Left colon (tissue), 2 donors: ENCODE measurements at regions of chr10 and their contacts with region 1.

Region 1: DNA sequence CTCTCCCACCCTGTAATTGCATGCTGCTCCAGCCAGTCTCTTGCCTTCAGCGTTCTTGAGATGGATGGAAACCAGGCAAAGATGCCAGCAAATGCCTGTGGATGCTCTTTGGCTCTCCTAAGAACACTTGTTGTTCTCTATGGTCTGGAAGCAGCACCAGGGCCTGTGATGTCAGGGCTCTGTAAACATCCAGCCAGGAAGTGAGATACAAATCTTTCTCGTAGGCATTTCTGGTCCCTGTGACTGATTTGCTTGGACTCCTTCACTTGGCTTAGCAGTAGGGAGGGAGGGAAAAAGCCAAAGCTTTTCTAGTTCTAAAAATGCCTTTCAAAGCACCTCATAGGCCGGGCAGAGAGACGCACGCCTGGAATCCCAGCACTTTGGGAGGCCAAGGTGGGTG is 201.3 kb downstream of the REEP3 start:
- DNase-seq: no peak
- ATAC-seq: no peak

Region 2: GRCh38 chr10:63166742-63167258 is 555.7 kb before region 1 on chr10:
- intact Hi-C with region 1: loop called in 1 of 2 experiments (anchors 2 kb)
- DNase-seq: no peak
- ATAC-seq: peak; percentile 82

Region 3: GRCh38 chr10:63217120-63217605 is 505.4 kb before region 1 on chr10:
- intact Hi-C with region 1: loop called in 1 of 2 experiments (anchors 2 kb)
- DNase-seq: no peak
- ATAC-seq: peak; percentile 86